ENCODE measurements at regions of chr3 and their contacts with region 1.

Region 1: DNA sequence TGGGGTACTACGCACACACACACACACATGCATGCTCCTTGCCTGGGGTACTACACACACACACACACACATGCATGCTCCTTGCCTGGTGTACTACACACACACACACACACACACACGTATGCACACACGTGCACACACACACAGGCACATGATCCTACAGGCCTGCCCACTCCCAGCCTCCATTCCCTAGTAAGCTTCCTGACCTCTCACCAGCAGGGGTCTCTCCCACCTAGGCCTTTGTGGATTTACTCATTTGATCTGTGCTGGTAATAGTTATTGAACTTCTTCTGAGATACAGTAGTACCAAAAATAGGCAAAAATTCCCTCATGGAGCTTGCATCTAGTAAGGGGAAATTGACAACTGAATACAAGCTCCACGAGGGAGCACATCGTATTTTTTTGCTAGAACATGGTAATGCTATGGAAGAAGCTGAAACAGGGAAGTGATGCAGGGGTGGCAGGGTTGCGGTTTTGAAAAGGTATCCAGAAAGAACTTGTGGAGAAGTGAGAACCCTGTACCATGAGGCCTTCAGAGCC is 19.1 kb downstream of the TTC21A start:
- DNase-seq: peak in 11 of 14 experiments; percentile 24 to 72 (median 45)
- ATAC-seq: peak; percentile 75
- H3K4me3 ChIP-seq: no peak overlapping the region
- H3K4me3 Mint-ChIP-seq: no peak overlapping the region
- H3K27ac ChIP-seq: no peak overlapping the region
- H3K27ac Mint-ChIP-seq: peak overlapping the region; percentile 3
- H3K4me1 ChIP-seq: peaks cover 20% of the 10 kb centered on the region
- H3K4me1 Mint-ChIP-seq: peaks cover 29% of the 10 kb centered on the region
- H3K27me3 ChIP-seq: no peaks in the 10 kb centered on the region
- H3K27me3 Mint-ChIP-seq: no peaks in the 10 kb centered on the region
- CTCF ChIP-seq: peak; percentile 45

Region 2: GRCh38 chr3:37571270-37571669 is 1555.3 kb before region 1 on chr3:
- CTCF ChIA-PET with region 1: no interaction called
- POLR2A ChIA-PET with region 1: no interaction called
- intact Hi-C with region 1: no loop called
- DNase-seq: no peak
- ATAC-seq: no peak
- H3K4me3 ChIP-seq: no peak overlapping the region
- H3K4me3 Mint-ChIP-seq: no peak overlapping the region
- H3K27ac ChIP-seq: no peak overlapping the region
- H3K27ac Mint-ChIP-seq: no peak overlapping the region
- H3K4me1 ChIP-seq: no peaks in the 10 kb centered on the region
- H3K4me1 Mint-ChIP-seq: no peaks in the 10 kb centered on the region
- H3K27me3 ChIP-seq: no peaks in the 10 kb centered on the region
- H3K27me3 Mint-ChIP-seq: no peaks in the 10 kb centered on the region
- CTCF ChIP-seq: no peak

Region 3: DNA sequence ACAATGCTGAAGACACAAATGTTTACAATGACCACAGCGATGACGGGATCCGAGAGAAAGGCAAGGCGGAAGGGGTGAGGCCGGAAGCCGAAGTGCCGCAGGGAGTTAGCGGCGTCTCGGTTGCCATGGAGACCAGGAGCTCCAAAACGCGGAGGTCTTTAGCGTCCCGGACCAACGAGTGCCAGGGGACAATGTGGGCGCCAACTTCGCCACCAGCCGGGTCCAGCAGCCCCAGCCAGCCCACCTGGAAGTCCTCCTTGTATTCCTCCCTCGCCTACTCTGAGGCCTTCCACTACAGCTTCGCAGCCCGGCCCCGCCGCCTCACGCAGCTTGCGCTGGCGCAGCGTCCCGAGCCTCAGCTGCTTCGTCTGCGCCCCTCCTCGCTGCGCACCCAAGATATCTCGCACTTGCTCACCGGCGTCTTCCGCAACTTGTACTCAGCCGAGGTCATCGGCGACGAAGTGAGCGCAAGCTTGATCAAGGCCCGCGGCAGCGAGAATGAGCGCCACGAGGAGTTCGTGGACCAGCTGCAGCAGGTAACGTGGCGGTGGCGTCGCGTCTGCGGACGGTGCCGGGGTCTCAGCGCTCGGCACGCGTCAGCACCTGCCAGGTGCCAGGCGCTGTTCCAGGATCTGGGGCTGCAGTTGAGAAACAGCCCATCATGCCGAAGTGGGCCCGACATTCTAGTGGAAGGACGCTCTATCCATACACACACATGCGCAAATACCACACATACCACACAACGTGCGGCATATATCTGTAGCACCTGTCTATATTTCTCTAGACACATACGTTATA is 1087.3 kb before region 1 on chr3 and contains the start of gene DLEC1:
- CTCF ChIA-PET with region 1: no interaction called
- POLR2A ChIA-PET with region 1: no interaction called
- intact Hi-C with region 1: no loop called
- DNase-seq: peak; percentile 70 to 95 (median 80)
- ATAC-seq: peak; percentile 59
- H3K4me3 ChIP-seq: peak within 1 kb of the TSS; percentile 76
- H3K4me3 Mint-ChIP-seq: peak within 1 kb of the TSS; percentile 65
- H3K27ac ChIP-seq: peak within 1 kb of the TSS; percentile 76 to 96
- H3K27ac Mint-ChIP-seq: peak within 1 kb of the TSS; percentile 91
- H3K4me1 ChIP-seq: peaks cover 46% of the 10 kb centered on the region
- H3K4me1 Mint-ChIP-seq: peaks cover 28% of the 10 kb centered on the region
- H3K27me3 ChIP-seq: no peaks in the 10 kb centered on the region
- H3K27me3 Mint-ChIP-seq: no peaks in the 10 kb centered on the region
- CTCF ChIP-seq: no peak
- total RNA-seq, gene DLEC1: 4.4 to 5.1 TPM

Region 4: GRCh38 chr3:38725726-38726419 is 400.7 kb before region 1 on chr3:
- CTCF ChIA-PET with region 1: no interaction called
- POLR2A ChIA-PET with region 1: no interaction called
- intact Hi-C with region 1: no loop called
- DNase-seq: no peak
- ATAC-seq: no peak
- H3K4me3 ChIP-seq: no peak overlapping the region
- H3K4me3 Mint-ChIP-seq: no peak overlapping the region
- H3K27ac ChIP-seq: no peak overlapping the region
- H3K27ac Mint-ChIP-seq: no peak overlapping the region
- H3K4me1 ChIP-seq: no peaks in the 10 kb centered on the region
- H3K4me1 Mint-ChIP-seq: no peaks in the 10 kb centered on the region
- H3K27me3 ChIP-seq: peaks cover 4 to 10% of the 10 kb centered on the region in 2 experiments
- H3K27me3 Mint-ChIP-seq: peaks cover 34% of the 10 kb centered on the region
- CTCF ChIP-seq: no peak

Region 5: DNA sequence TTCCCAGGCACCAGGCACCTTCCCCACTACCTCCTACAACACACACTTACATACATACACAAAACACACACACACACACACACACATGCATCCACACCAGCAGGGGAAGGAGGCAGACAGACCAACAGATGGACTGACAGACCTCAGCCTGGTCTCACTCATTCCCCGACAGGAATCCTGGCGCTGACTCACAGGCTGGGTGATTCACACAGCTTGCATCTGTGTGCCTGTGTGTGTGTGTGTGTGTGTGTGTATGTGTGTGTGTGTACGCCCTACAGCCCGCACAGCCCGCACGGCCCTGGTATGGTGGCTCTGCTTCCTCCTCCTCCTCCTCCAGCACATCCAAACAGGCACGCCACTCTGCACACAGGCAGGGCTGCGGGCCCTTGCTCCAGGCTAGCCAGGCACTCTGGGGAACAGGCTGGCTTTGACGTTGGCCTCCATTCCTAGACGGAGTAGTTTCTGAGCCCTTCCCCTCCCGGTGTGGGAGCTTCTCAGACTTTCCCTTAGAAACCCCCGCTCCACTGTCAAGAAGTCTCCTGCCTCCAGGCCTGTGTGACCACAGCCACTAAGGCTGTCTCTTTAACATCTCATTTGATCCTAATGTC is 20.5 kb after region 1 on chr3:
- CTCF ChIA-PET with region 1: interaction called, 3 read pairs
- POLR2A ChIA-PET with region 1: interaction called, 9 read pairs
- intact Hi-C with region 1: loop called in 1 of 2 experiments (anchors 2 kb)
- DNase-seq: peak in 13 of 14 experiments; percentile 48 to 89 (median 71)
- ATAC-seq: peak; percentile 27
- H3K4me3 ChIP-seq: peak overlapping the region; percentile 44
- H3K4me3 Mint-ChIP-seq: peak overlapping the region; percentile 93
- H3K27ac ChIP-seq: peak overlapping the region; percentile 64 to 83
- H3K27ac Mint-ChIP-seq: peak overlapping the region; percentile 97
- H3K4me1 ChIP-seq: peaks cover 77% of the 10 kb centered on the region
- H3K4me1 Mint-ChIP-seq: peaks cover 83% of the 10 kb centered on the region
- H3K27me3 ChIP-seq: no peaks in the 10 kb centered on the region
- H3K27me3 Mint-ChIP-seq: no peaks in the 10 kb centered on the region
- CTCF ChIP-seq: no peak

Region 6: GRCh38 chr3:39189959-39190269 is 63.3 kb after region 1 on chr3:
- CTCF ChIA-PET with region 1: no interaction called
- POLR2A ChIA-PET with region 1: no interaction called
- intact Hi-C with region 1: loop called in 1 of 2 experiments (anchors 5 kb)
- DNase-seq: peak in 13 of 14 experiments; percentile 21 to 81 (median 39)
- ATAC-seq: peak; percentile 82
- H3K4me3 ChIP-seq: no peak overlapping the region
- H3K4me3 Mint-ChIP-seq: no peak overlapping the region
- H3K27ac ChIP-seq: no peak overlapping the region
- H3K27ac Mint-ChIP-seq: no peak overlapping the region
- H3K4me1 ChIP-seq: peaks cover 6% of the 10 kb centered on the region
- H3K4me1 Mint-ChIP-seq: no peaks in the 10 kb centered on the region
- H3K27me3 ChIP-seq: no peaks in the 10 kb centered on the region
- H3K27me3 Mint-ChIP-seq: no peaks in the 10 kb centered on the region
- CTCF ChIP-seq: peak; percentile 78